ENCODE measurements at regions of chr16 and their contacts with region 1.

Region 1: DNA sequence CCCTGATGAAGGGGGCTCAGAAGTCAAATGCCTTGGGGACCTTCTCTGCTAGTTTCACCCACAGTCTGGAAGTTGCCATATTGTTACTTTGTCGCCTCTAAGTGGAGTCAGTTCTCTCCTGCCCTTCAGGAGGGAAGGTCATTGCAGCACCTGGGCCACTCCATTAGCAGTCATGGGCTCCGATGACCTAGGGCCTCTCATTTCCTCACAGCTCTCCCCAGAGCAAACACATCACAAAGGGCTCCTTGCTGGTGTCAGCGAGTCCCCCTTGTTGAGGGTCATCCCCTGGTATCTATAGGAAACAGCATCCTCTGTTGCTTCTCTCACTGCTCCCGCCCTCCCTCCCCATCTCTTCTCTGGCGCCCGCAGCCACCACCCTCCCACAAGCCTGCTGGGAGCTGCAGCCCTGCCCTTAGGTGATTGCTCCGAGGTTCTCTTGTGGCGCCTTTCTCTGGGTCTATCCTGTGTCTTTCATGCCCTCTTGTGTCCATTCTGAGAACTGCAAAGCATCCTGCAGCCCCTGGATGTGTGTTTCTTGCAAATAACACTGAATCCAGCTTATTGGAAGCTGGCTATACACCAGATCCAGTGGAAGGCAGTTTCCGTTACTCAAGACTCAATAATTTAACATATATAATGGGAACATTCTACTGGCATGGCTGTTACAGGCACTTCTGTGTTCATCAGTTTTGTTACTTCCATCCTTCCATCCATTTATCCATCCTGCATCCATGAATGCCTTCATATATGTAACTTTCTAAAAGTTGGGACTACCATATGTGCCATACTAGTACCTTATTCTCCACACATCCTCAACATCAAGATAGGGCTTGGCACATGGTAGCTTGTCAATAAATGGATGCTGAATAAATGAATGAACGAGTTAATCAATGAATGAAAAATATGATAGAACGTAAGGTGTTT is 21.2 kb downstream of the PDILT start:
- DNase-seq: peak; percentile 71
- ATAC-seq: peak; percentile 84
- H3K4me3 Mint-ChIP-seq: no peak overlapping the region
- H3K27ac Mint-ChIP-seq: no peak overlapping the region
- H3K4me1 Mint-ChIP-seq: no peaks in the 10 kb centered on the region
- H3K27me3 Mint-ChIP-seq: peaks cover 13% of the 10 kb centered on the region

Region 2: GRCh38 chr16:19601083-19601976 is 782.0 kb before region 1 on chr16:
- CTCF ChIA-PET with region 1: interaction called, 5 read pairs
- POLR2A ChIA-PET with region 1: no interaction called
- intact Hi-C with region 1: loop called in 1 of 2 experiments (anchors 10 kb)
- DNase-seq: peak; percentile 51
- ATAC-seq: no peak
- H3K4me3 Mint-ChIP-seq: no peak overlapping the region
- H3K27ac Mint-ChIP-seq: no peak overlapping the region
- H3K4me1 Mint-ChIP-seq: no peaks in the 10 kb centered on the region
- H3K27me3 Mint-ChIP-seq: no peaks in the 10 kb centered on the region

Region 3: GRCh38 chr16:19907161-19907992 is 476.0 kb before region 1 on chr16:
- CTCF ChIA-PET with region 1: interaction called, 87 read pairs
- POLR2A ChIA-PET with region 1: no interaction called
- intact Hi-C with region 1: loop called (anchors 1 to 2 kb)
- DNase-seq: peak; percentile 86
- ATAC-seq: peak; percentile 99
- H3K4me3 Mint-ChIP-seq: peak overlapping the region; percentile 47
- H3K27ac Mint-ChIP-seq: peak overlapping the region; percentile 47
- H3K4me1 Mint-ChIP-seq: peaks cover 9% of the 10 kb centered on the region
- H3K27me3 Mint-ChIP-seq: peaks cover 9% of the 10 kb centered on the region

Region 4: DNA sequence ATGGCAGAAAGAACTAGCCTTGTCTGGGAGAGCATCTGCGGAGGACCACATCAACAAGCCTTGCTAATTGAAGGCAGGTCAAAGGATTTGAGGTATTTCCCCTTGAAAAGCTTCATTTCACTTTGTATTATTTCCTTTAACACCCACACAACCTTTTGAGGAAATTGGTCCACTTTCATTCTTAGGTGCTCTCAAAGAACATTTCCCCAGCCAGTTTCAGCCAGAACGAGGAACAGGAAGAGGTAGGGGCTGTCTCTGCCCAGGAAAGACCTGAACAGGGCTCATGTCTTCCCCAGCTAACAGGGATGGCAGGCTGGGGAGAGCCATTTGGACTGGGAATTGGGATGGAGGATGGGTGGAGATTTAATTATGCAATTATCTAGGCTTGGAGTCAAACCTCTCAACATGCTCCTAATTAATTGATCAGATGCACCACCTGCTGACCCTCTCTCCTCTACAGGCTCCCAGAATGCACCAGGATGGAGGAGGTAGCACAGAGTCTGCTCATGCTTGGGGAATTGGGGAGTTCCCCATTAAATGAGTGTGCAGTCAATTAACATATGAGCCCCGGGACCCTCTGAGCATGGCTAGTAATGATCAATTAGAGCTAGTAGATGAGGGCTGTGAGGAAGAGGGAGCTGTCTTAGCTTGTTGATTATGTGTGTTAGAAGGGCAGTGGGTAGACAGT is 140.7 kb before region 1 on chr16:
- CTCF ChIA-PET with region 1: no interaction called
- POLR2A ChIA-PET with region 1: no interaction called
- intact Hi-C with region 1: no loop called
- DNase-seq: no peak
- ATAC-seq: no peak
- H3K4me3 Mint-ChIP-seq: no peak overlapping the region
- H3K27ac Mint-ChIP-seq: no peak overlapping the region
- H3K4me1 Mint-ChIP-seq: no peaks in the 10 kb centered on the region
- H3K27me3 Mint-ChIP-seq: peaks cover 14% of the 10 kb centered on the region

Region 5: DNA sequence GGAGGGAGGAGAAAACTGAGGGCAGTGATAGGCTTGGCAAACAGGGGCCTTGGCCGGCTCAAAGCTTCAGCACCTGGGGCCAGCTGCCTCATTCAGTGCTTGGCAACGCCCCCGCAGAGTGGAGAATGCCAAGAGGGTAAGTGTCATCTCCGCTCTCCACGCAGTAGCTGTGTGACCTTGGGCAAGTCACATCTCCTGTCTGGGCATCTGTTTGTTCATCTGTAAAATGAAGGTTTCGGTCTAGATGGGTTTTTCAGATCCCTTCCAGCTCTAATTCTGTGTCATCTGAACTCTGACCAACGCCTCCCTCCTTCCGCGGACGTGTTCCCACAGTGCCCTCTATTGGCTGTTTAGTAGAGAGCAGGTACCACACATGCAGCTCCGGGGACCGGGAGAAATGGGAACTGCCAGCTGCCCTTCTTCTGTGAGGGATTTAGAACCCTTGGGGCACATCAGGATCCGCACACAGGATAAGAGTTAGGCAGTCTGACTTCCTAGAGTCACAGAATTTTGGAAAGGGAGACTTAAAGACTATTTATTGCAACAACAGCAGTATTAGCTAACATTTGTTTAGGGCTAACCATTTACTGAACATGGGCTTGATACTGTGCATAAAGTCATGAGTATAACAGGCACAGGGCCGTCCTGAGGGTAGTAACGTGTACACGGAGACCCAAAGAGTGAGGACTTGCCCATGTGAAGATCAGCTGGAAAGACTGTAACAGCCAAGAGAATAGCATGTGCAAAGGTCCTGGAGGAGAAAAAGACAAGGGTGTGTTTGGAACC is 82.9 kb before region 1 on chr16:
- CTCF ChIA-PET with region 1: interaction called, 22 read pairs
- POLR2A ChIA-PET with region 1: no interaction called
- intact Hi-C with region 1: no loop called
- DNase-seq: peak; percentile 63
- ATAC-seq: peak; percentile 51
- H3K4me3 Mint-ChIP-seq: no peak overlapping the region
- H3K27ac Mint-ChIP-seq: no peak overlapping the region
- H3K4me1 Mint-ChIP-seq: no peaks in the 10 kb centered on the region
- H3K27me3 Mint-ChIP-seq: peaks cover 18% of the 10 kb centered on the region

Region 6: GRCh38 chr16:20441191-20441590 is 57.8 kb after region 1 on chr16:
- CTCF ChIA-PET with region 1: no interaction called
- POLR2A ChIA-PET with region 1: no interaction called
- intact Hi-C with region 1: no loop called
- DNase-seq: no peak
- ATAC-seq: no peak
- H3K4me3 Mint-ChIP-seq: no peak overlapping the region
- H3K27ac Mint-ChIP-seq: no peak overlapping the region
- H3K4me1 Mint-ChIP-seq: no peaks in the 10 kb centered on the region
- H3K27me3 Mint-ChIP-seq: peaks cover 2% of the 10 kb centered on the region

Region 7: GRCh38 chr16:20704281-20704680 is 320.9 kb after region 1 on chr16:
- CTCF ChIA-PET with region 1: no interaction called
- POLR2A ChIA-PET with region 1: no interaction called
- intact Hi-C with region 1: loop called in 1 of 2 experiments (anchors 2 kb)
- DNase-seq: no peak
- ATAC-seq: no peak
- H3K4me3 Mint-ChIP-seq: no peak overlapping the region
- H3K27ac Mint-ChIP-seq: no peak overlapping the region
- H3K4me1 Mint-ChIP-seq: no peaks in the 10 kb centered on the region
- H3K27me3 Mint-ChIP-seq: peaks cover 4% of the 10 kb centered on the region

Measured in activated CD4-positive, alpha-beta T cell treated with anti-CD3 and anti-CD28 coated beads for 36 hours (primary cell).